Activated B cell treated with CpG ODN at 0.5 μM for 24 hours (primary cell): ENCODE measurements at regions of chr18 and their contacts with region 1.

Region 1: GRCh38 chr18:56638271-56639093 is at the start of gene TXNL1:
- DNase-seq: peak; percentile 95
- ATAC-seq: peak; percentile 96
- H3K4me3 Mint-ChIP-seq: peak within 1 kb of the TSS; percentile 96
- H3K27ac Mint-ChIP-seq: peak within 1 kb of the TSS; percentile 99
- H3K4me1 Mint-ChIP-seq: peaks cover 52% of the 10 kb centered on the region
- H3K27me3 Mint-ChIP-seq: no peaks in the 10 kb centered on the region
- CTCF ChIP-seq: no peak
- total RNA-seq, gene TXNL1: 53.4 and 55.4 TPM in 2 replicates

Region 2: GRCh38 chr18:55605733-55606338 is 1032.6 kb before region 1 on chr18:
- CTCF ChIA-PET with region 1: no interaction called
- POLR2A ChIA-PET with region 1: no interaction called
- intact Hi-C with region 1: loop called (anchors 5 kb)
- DNase-seq: no peak
- ATAC-seq: peak; percentile 92
- H3K4me3 Mint-ChIP-seq: peak overlapping the region; percentile 21
- H3K27ac Mint-ChIP-seq: peak overlapping the region; percentile 76
- H3K4me1 Mint-ChIP-seq: peaks cover 31% of the 10 kb centered on the region
- H3K27me3 Mint-ChIP-seq: no peaks in the 10 kb centered on the region
- CTCF ChIP-seq: no peak

Region 3: GRCh38 chr18:56248610-56249235 is 389.8 kb before region 1 on chr18:
- CTCF ChIA-PET with region 1: no interaction called
- POLR2A ChIA-PET with region 1: no interaction called
- intact Hi-C with region 1: loop called (anchors 10 kb)
- DNase-seq: peak; percentile 27
- ATAC-seq: peak; percentile 96
- H3K4me3 Mint-ChIP-seq: peak overlapping the region; percentile 70
- H3K27ac Mint-ChIP-seq: peak overlapping the region; percentile 82
- H3K4me1 Mint-ChIP-seq: peaks cover 51% of the 10 kb centered on the region
- H3K27me3 Mint-ChIP-seq: no peaks in the 10 kb centered on the region
- CTCF ChIP-seq: no peak

Region 4: GRCh38 chr18:56627991-56628390 is 10.5 kb before region 1 on chr18:
- CTCF ChIA-PET with region 1: no interaction called
- POLR2A ChIA-PET with region 1: interaction called, 3 read pairs
- intact Hi-C with region 1: loop called (anchors 2 kb)
- DNase-seq: no peak
- ATAC-seq: no peak
- H3K4me3 Mint-ChIP-seq: no peak overlapping the region
- H3K27ac Mint-ChIP-seq: no peak overlapping the region
- H3K4me1 Mint-ChIP-seq: peaks cover 15% of the 10 kb centered on the region
- H3K27me3 Mint-ChIP-seq: no peaks in the 10 kb centered on the region
- CTCF ChIP-seq: no peak

Region 5: GRCh38 chr18:56650944-56651770 is 12.7 kb after region 1 on chr18 and contains the start of gene WDR7:
- CTCF ChIA-PET with region 1: no interaction called
- POLR2A ChIA-PET with region 1: interaction called, 56 read pairs
- intact Hi-C with region 1: loop called (anchors 1 kb)
- DNase-seq: peak; percentile 81
- ATAC-seq: peak; percentile 93
- H3K4me3 Mint-ChIP-seq: peak within 1 kb of the TSS; percentile 92
- H3K27ac Mint-ChIP-seq: peak within 1 kb of the TSS; percentile 92
- H3K4me1 Mint-ChIP-seq: peaks cover 36% of the 10 kb centered on the region
- H3K27me3 Mint-ChIP-seq: no peaks in the 10 kb centered on the region
- CTCF ChIP-seq: no peak
- total RNA-seq, gene WDR7: 26.0 and 33.4 TPM in 2 replicates

Region 6: GRCh38 chr18:57434536-57435494 is 796.3 kb after region 1 on chr18 and contains the start of gene ONECUT2:
- CTCF ChIA-PET with region 1: no interaction called
- POLR2A ChIA-PET with region 1: no interaction called
- intact Hi-C with region 1: loop called (anchors 5 kb)
- DNase-seq: peak; percentile 36
- ATAC-seq: peak; percentile 93
- H3K4me3 Mint-ChIP-seq: peak within 1 kb of the TSS; percentile 61
- H3K27ac Mint-ChIP-seq: no peak within 1 kb of the TSS
- H3K4me1 Mint-ChIP-seq: peaks cover 35% of the 10 kb centered on the region
- H3K27me3 Mint-ChIP-seq: peaks cover 77% of the 10 kb centered on the region
- CTCF ChIP-seq: no peak
- total RNA-seq, gene ONECUT2: not detected in 2 replicates